ENCODE measurements at regions of chr1 and their contacts with region 1.

Region 1: GRCh38 chr1:54041806-54042205 is 11.2 kb downstream of the TMEM59 start:
- DNase-seq: no peak
- H3K4me3 ChIP-seq: no peak overlapping the region
- H3K27ac ChIP-seq: no peak overlapping the region
- H3K4me1 ChIP-seq: no peaks in the 10 kb centered on the region
- H3K27me3 ChIP-seq: no peaks in the 10 kb centered on the region
- CTCF ChIP-seq: no peak

Region 2: DNA sequence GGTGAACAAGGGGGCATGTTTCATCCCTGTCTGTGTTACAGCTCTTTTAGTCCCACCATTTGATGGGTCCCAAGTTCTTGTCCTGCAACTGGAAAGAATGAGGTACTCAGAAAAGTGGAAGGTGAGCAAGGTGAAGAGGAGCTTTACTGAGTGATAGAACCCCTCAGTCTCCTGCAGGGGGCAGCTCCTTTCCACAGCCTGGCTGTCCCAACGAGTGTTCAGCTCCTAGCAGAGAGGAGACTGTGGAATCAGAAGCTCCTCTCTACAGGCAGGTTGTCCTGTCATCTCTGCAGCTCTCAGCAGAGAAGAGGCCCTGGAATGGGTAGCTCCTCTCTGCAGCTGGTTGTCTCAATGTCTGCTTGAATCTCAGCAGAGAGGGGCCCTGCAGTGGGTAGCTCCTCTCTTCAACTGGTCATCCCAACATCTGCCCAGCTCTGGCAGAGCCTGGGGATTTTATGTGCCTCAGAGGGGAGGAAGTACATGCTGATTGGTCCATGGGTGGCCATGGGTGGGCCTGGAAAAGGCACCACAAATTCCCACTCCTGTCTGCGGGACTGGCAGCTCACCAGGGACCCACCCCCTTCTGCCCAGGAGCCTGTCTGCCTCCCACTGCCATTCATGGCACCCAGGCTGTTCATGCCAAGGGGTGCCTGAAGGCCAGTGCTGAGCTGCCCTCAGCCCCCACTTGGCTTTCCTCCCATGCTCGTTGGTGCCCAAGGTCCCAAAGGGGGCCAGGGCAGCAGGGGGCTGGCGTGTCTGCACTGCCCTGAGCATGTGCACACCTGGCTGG is 49.5 kb before region 1 on chr1:
- CTCF ChIA-PET with region 1: no interaction called
- dilution Hi-C with region 1: loop called (anchors 5 kb)
- in situ Hi-C with region 1: no loop called
- intact Hi-C with region 1: no loop called
- DNase-seq: no peak
- H3K4me3 ChIP-seq: no peak overlapping the region
- H3K27ac ChIP-seq: no peak overlapping the region
- H3K4me1 ChIP-seq: no peaks in the 10 kb centered on the region
- H3K27me3 ChIP-seq: peaks cover 3% of the 10 kb centered on the region
- CTCF ChIP-seq: peak; percentile 32 to 64

Region 3: DNA sequence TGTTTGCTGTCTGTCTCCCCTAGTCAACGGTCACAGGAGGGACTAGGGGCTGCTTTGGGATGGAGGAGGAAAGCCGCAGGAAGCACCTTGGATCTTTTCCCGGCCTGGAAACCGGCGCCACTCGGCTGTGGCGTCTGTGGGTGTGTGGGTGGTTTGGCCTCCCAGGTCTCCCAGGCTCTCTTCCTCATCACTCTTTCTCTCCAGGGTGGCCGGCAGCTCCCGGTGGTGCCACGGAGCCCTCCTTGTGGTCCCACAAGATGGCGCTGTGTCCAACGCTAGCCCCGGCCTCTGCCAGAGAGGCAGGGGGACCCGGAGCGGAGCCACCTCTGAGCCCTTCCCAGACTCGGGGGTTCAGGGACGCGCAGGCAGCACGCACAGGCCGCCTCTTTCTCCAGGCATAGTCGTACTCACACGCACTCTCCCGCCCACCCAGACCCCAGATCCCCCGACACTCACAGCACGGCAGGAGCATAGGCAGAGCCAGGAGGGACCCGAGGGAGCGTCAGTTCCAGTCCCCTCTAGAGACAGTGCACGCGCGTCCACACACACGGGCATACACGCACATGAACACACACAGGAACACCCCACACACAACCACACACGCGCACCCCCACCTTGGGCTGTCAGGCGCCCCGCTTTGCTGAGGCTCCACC is 79.8 kb after region 1 on chr1:
- CTCF ChIA-PET with region 1: no interaction called
- dilution Hi-C with region 1: no loop called
- in situ Hi-C with region 1: no loop called
- intact Hi-C with region 1: no loop called
- DNase-seq: peak; percentile 44
- H3K4me3 ChIP-seq: peak overlapping the region in 2 of 3 experiments; percentile 6 to 22
- H3K27ac ChIP-seq: no peak overlapping the region
- H3K4me1 ChIP-seq: peaks cover 8% of the 10 kb centered on the region
- H3K27me3 ChIP-seq: no peaks in the 10 kb centered on the region
- CTCF ChIP-seq: peak; percentile 57 to 79